Left cardiac atrium (tissue), 4 donors: ENCODE measurements at regions of chr10 and their contacts with region 1.

Region 1: GRCh38 chr10:61284222-61284890 is 168.8 kb downstream of the TMEM26 start:
- DNase-seq: no peak
- ATAC-seq: peak; percentile 50 to 59

Region 2: DNA sequence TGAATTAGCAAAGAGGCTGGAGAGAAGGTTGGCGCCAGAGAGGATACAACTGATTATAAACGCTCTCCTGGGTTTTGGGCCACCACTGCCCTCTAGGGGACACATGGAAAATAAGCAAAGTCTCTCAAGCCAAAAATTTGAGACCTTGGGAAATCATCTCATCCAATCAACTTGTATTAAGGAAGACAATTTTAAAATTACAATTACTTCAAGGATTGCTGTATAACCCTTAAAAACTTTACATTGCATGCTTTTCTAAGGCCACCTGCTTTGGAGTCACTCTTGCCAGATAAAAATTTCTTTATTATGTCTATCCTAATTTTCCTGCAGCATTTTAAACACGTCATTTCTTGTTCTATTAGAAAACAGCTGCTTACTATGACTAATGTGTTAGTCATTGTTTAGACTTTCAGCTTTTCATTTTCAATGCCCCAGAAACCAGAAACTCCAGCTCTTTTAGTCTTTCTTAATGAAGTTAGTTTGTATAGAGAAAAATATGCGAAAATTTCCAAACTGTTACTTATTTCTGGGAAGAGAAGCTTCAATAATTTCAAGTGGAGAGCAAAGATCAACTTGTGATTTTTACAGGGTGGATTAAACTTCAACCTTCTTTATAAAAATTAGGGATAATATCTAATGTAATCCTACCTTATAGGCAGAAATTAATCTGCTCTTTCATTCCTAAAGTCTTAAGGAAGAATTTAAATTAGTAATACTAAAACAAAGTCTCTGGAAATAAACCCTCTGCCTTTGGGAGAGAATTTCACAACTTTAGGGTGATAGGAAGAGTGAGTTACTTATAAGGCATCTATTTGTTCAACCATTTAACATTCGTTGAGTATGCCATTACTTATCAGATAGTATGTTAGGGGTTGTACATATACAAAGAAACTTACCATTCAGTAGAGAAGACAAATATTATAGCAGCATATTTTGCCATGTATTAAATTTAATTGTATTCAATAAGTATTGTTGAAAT is 319.8 kb before region 1 on chr10:
- intact Hi-C with region 1: loop called in 1 of 2 experiments (anchors 10 kb)
- DNase-seq: peak; percentile 70
- ATAC-seq: peak; percentile 91 to 92

Region 3: GRCh38 chr10:61120805-61121204 is 163.6 kb before region 1 on chr10:
- intact Hi-C with region 1: no loop called
- DNase-seq: no peak
- ATAC-seq: no peak

Region 4: GRCh38 chr10:61140765-61141392 is 143.5 kb before region 1 on chr10:
- intact Hi-C with region 1: loop called (anchors 2 to 5 kb)
- DNase-seq: no peak
- ATAC-seq: peak; percentile 74 to 75